Dendritic cell treated with granulocyte-macrophage colony-stimulating factor and Interleukin-4, amounts not matched to agents 40 ng/mL and 50 ng/mL, for 4 days (primary cell): ENCODE measurements at regions of chrX and their contacts with region 1.

Region 1: DNA sequence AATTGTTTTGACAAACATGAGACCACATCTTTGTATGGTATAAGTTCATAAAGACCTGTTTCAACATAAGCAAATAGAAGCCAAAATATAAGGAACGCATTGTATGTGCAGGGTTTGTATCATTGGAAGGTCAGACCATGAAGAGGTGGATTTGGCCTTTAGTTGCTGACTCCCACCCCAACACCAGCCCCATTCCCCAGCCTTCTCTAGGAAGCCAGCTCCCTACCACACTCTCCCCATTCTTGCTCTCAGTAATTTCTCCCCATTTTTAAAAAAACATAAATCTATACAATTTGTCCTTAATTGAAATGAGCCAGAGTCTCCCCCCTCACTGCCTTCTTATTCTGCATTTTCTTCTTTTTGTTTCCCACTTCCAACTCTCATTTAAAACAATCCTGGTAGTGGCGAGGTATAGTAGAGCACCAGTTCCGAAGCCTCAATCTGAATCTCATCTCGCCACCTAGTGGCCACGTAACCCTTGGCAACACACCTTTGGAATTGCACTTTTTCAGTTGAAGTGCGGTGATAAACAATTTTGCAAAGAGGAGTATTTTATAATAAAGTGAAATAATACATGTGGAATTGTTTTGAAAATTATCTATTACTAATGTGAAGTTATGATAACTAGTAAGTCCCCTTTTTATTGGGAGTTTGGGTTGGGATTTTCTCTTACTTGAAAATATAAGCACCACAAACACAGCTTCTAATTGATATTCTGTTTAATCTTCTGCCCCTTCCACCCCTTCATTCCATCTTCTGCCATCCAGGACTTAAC is 126.6 kb downstream of the ASB9 start:
- H3K4me3 Mint-ChIP-seq: no peak overlapping the region
- H3K27ac Mint-ChIP-seq: no peak overlapping the region
- H3K4me1 Mint-ChIP-seq: peaks cover 12% of the 10 kb centered on the region
- H3K27me3 Mint-ChIP-seq: peaks cover 2% of the 10 kb centered on the region

Region 2: GRCh38 chrX:14039344-14039743 is 1103.9 kb before region 1 on chrX:
- intact Hi-C with region 1: loop called (anchors 5 kb)
- H3K4me3 Mint-ChIP-seq: no peak overlapping the region
- H3K27ac Mint-ChIP-seq: no peak overlapping the region
- H3K4me1 Mint-ChIP-seq: no peaks in the 10 kb centered on the region
- H3K27me3 Mint-ChIP-seq: no peaks in the 10 kb centered on the region